Activated B cell treated with CpG ODN at 0.5 μM for 24 hours (primary cell): ENCODE measurements at regions of chr10 and their contacts with region 1.

Region 1: GRCh38 chr10:132307823-132308587 is at the start of gene STK32C:
- DNase-seq: peak; percentile 79
- ATAC-seq: peak; percentile 90
- H3K4me3 Mint-ChIP-seq: peak within 1 kb of the TSS; percentile 86
- H3K27ac Mint-ChIP-seq: no peak within 1 kb of the TSS
- H3K4me1 Mint-ChIP-seq: peaks cover 11% of the 10 kb centered on the region
- H3K27me3 Mint-ChIP-seq: peaks cover 11% of the 10 kb centered on the region
- CTCF ChIP-seq: no peak
- total RNA-seq, gene STK32C: 11.0 and 13.8 TPM in 2 replicates

Region 2: DNA sequence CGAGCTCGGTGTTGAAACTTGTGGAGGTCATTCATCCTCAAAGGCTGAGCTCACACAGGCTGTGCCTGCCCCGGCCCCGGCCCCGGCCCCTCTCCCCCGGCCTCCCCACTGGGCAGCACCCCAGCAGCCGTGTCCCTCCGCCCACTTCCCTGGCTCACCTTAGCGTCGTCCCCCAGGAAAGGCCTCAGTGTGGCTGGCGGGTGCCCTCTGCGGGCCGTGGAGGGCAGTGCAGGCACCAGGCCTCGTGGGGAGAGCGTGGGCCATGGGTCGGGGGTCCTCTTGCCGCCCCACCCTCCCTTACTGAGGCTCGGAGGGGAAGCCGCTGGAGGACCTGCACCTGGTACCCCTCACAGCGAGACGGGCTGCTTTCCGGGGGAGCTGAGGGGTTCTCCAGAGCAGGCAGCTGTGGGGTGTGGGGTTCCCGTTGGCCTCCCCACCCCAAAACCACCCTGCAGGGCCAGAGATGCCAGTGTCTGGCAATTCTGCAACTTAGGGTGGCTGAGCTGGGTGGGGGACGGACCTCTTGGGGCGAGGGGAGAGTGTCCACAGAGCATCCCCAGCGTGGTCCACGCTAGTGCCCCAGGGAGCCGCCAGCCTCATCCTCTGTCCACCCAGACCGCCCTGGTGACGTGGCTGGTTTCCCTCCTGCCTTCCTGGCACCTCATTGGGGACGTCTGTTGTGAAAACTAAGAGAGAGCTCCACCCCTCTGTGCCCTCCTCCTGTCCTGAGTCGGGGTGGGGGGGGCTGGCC is 165.4 kb before region 1 on chr10:
- CTCF ChIA-PET with region 1: no interaction called
- POLR2A ChIA-PET with region 1: no interaction called
- intact Hi-C with region 1: loop called (anchors 5 kb)
- DNase-seq: peak; percentile 51
- ATAC-seq: peak; percentile 74
- H3K4me3 Mint-ChIP-seq: no peak overlapping the region
- H3K27ac Mint-ChIP-seq: no peak overlapping the region
- H3K4me1 Mint-ChIP-seq: no peaks in the 10 kb centered on the region
- H3K27me3 Mint-ChIP-seq: no peaks in the 10 kb centered on the region
- CTCF ChIP-seq: peak; percentile 69

Region 3: GRCh38 chr10:132232023-132232951 is 75.7 kb before region 1 on chr10:
- CTCF ChIA-PET with region 1: no interaction called
- POLR2A ChIA-PET with region 1: interaction called, 3 read pairs
- intact Hi-C with region 1: loop called (anchors 1 kb)
- DNase-seq: peak; percentile 37
- ATAC-seq: peak; percentile 80
- H3K4me3 Mint-ChIP-seq: peak overlapping the region; percentile 78
- H3K27ac Mint-ChIP-seq: peak overlapping the region; percentile 83
- H3K4me1 Mint-ChIP-seq: peaks cover 33% of the 10 kb centered on the region
- H3K27me3 Mint-ChIP-seq: no peaks in the 10 kb centered on the region
- CTCF ChIP-seq: no peak

Region 4: GRCh38 chr10:132452631-132453469 is 144.8 kb after region 1 on chr10:
- CTCF ChIA-PET with region 1: no interaction called
- POLR2A ChIA-PET with region 1: no interaction called
- intact Hi-C with region 1: loop called (anchors 1 kb)
- DNase-seq: peak; percentile 95
- ATAC-seq: peak; percentile 90
- H3K4me3 Mint-ChIP-seq: peak overlapping the region; percentile 38
- H3K27ac Mint-ChIP-seq: peak overlapping the region; percentile 77
- H3K4me1 Mint-ChIP-seq: peaks cover 24% of the 10 kb centered on the region
- H3K27me3 Mint-ChIP-seq: no peaks in the 10 kb centered on the region
- CTCF ChIP-seq: peak; percentile 66

Region 5: DNA sequence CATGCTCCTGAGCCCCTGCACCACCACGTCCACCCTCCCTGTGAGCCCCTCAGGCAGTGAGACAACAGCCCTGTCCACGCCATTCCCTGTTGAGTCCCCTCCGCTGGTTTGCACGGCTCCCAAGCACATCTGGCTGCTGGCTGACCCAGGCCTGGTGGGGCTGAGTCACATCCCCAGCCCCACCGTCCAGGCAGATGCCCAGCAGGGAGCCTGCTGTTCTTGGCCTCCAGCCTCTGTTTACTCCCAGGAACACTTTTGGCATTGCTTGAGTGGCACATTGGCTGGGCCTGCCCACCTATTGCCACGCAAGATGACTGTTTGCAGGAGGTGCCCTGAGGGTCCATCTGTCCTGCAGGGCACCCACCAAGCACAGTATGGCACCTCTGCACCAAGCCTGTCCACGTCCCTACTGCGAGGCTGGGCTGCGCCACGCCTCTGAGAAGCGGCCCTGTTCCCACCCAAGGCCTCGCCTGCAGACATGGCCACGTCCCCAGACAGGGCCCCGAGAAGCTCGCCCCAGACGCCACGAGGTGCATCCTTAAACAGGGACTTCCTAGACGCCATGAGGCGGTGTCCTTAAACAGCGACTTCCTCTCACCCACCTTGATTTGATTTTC is 181.2 kb after region 1 on chr10:
- CTCF ChIA-PET with region 1: no interaction called
- POLR2A ChIA-PET with region 1: no interaction called
- intact Hi-C with region 1: no loop called
- DNase-seq: no peak
- ATAC-seq: no peak
- H3K4me3 Mint-ChIP-seq: no peak overlapping the region
- H3K27ac Mint-ChIP-seq: no peak overlapping the region
- H3K4me1 Mint-ChIP-seq: no peaks in the 10 kb centered on the region
- H3K27me3 Mint-ChIP-seq: no peaks in the 10 kb centered on the region
- CTCF ChIP-seq: no peak